AG04449 (cell line): ENCODE measurements at regions of chr12 and their contacts with region 1.

Region 1: GRCh38 chr12:64560396-64561304 is 49.6 kb upstream of the RASSF3 start:
- DNase-seq: peak; percentile 86
- H3K4me3 ChIP-seq: no peak overlapping the region
- CTCF ChIP-seq: no peak

Region 2: DNA sequence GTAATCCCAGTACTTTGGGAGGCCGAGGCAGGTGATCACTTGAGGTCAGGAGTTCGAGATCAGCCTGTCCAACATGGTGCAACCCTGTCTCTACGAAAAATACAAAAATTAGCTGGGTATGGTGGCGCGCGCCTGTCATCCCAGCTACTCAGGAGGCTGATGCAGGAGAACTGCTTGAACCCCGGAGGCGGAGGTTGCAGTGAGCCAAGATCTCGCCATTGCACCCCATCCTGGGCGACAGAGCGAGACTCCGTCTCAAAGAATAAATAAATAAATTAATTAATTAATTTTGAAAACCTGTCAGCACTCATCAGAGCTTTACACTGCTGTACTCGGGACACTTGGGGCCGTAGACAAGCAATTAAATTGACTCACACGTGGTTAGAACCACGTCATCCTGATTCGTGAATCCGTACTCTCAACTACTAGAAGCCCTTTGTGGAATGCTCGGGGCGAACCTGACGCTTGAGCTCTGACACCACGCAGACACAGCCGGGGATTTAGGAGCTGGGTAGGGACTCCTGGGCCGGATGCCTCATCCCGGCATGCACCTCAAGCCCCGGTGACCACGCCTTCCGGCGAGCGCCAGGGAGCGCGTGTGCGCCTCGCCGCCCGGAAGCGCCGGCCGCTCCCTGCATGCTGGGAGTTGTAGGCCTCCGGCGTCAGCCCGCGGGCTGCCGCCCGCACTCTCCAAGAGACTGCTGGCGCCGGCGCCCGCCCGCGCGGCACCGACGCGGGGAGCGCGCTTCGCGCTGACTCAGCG is 156.8 kb before region 1 on chr12 and contains the start of gene XPOT:
- CTCF ChIA-PET with region 1: no interaction called
- POLR2A ChIA-PET with region 1: no interaction called
- DNase-seq: peak; percentile 82
- H3K4me3 ChIP-seq: peak within 1 kb of the TSS; percentile 98
- CTCF ChIP-seq: no peak

Region 3: DNA sequence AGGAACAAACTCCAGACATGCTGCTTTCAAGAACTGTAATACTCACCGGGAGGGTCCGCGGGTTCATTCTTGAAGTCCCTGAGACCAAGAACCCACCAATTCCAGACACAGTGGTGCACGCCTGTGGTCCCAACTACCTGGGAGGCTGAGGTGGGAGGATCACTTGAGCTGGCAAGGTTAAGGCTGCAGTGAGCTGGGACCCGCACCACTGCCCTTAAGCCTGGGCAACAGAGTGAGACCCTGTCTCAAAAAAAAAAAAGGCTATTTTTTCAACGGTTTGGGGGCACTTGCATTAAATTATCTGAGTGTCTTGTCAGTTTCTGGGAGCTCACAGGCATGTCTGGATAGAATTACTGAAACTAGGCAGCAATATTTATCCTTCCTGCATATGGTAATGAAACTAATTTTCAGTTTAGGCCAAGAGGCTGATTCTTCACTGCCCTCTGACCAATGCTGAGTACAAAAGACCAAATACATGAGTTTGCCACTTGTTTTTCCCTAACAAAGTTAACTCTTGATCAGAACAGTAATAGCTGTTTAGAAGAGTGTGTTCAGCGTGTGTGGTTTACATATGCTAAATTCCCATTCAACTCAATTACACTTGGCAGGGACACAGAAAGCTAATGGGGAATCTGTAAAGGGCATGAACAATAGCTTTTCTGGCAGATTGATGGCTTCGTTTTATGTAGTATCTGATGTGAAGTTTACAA is 16.1 kb before region 1 on chr12:
- CTCF ChIA-PET with region 1: interaction called, 128 read pairs
- POLR2A ChIA-PET with region 1: interaction called, 3 read pairs
- DNase-seq: no peak
- H3K4me3 ChIP-seq: no peak overlapping the region
- CTCF ChIP-seq: no peak

Region 4: DNA sequence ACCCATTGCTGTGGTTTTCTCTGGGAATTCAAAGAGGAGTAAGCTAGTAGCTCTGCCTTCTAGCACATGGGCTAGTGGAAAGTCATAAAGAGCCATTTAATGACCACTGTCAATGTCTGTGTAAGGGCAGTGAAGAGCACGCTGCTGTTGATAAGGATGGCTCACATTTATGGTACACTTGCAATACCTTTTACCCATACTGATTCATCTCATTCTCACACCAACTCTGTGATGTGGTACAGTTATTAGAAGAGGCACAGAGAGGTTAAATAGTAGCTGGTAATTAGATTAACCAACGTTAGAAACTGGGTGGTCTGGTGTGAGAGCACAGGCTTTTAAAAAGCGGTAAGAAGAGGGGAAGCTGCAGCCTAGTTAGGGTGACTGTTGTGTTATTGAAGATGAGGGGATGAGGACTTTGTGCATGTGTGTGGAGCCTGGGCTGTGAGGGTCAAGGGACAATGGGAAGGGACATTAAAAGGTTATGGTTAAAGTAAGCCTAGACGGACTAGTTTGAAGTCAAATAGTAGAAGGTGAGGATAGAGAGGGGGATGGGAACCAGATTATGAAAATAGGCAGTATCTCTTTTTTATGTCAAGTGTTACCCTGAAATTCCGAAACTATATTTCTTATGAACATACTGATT is 74.8 kb after region 1 on chr12:
- CTCF ChIA-PET with region 1: no interaction called
- POLR2A ChIA-PET with region 1: no interaction called
- DNase-seq: no peak
- H3K4me3 ChIP-seq: no peak overlapping the region
- CTCF ChIP-seq: no peak

Region 5: GRCh38 chr12:66130277-66131066 is 1569.8 kb after region 1 on chr12 and contains the start of gene LLPH:
- CTCF ChIA-PET with region 1: no interaction called
- POLR2A ChIA-PET with region 1: no interaction called
- DNase-seq: peak; percentile 33
- H3K4me3 ChIP-seq: peak within 1 kb of the TSS; percentile 95
- CTCF ChIP-seq: no peak